ENCODE measurements at regions of chr4 and their contacts with region 1.

Region 1: GRCh38 chr4:58061970-58062369 is 951.8 kb upstream of the IGFBP7 start:
- DNase-seq: no peak
- ATAC-seq: peak; percentile 24

Region 2: GRCh38 chr4:57430726-57431125 is 631.2 kb before region 1 on chr4:
- intact Hi-C with region 1: loop called (anchors 10 kb)
- DNase-seq: no peak
- ATAC-seq: no peak

Region 3: GRCh38 chr4:58275856-58276255 is 213.9 kb after region 1 on chr4:
- intact Hi-C with region 1: no loop called
- DNase-seq: no peak
- ATAC-seq: no peak

Measured in left ventricle myocardium superior (tissue), 1 donor.